Posterior vena cava (tissue), 2 donors: ENCODE measurements at regions of chr11 and their contacts with region 1.

Region 1: GRCh38 chr11:128565881-128566280 is 21.5 kb downstream of the ETS1 start:
- DNase-seq: no peak

Region 2: GRCh38 chr11:128052912-128053641 is 512.8 kb before region 1 on chr11:
- intact Hi-C with region 1: no loop called
- DNase-seq: no peak

Region 3: DNA sequence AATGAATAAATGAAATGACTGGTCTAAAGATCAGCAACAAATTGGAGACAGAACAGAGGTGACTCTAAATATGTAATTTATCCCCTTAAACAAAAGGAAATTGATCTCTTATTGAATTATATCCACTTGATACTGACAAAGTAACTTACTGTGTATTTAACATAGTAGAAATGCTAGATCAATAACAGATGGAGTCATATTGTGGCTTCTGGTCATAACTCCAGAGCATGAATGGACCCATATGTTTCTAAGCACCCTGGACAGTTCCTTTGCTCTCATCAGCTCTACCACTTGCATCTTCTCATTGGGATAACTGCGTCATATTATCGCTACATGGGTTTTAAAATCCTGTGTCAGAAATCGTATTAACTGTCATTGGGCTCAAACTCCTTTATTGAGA is 200.8 kb before region 1 on chr11:
- intact Hi-C with region 1: no loop called
- DNase-seq: no peak

Region 4: DNA sequence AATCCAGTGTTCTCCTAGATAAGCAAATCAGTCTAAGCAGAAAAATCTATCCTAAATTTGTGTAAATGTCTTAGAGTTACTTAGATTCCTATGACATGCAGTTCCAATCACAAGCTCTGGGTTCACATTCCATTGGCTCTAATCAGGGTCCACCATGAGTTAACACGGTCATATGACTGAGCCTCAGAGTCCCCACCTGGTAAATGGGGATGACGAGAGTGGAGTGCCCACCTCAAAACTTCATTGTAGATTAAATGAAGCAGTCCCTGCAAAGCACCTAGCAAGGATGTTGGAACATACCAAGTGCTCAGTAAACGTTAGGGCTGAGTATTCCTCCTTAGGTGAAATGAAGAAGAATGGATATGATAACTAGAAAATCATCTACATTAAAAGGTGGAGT is 18.4 kb after region 1 on chr11:
- intact Hi-C with region 1: loop called in 1 of 2 experiments (anchors 1 kb)
- DNase-seq: no peak

Region 5: DNA sequence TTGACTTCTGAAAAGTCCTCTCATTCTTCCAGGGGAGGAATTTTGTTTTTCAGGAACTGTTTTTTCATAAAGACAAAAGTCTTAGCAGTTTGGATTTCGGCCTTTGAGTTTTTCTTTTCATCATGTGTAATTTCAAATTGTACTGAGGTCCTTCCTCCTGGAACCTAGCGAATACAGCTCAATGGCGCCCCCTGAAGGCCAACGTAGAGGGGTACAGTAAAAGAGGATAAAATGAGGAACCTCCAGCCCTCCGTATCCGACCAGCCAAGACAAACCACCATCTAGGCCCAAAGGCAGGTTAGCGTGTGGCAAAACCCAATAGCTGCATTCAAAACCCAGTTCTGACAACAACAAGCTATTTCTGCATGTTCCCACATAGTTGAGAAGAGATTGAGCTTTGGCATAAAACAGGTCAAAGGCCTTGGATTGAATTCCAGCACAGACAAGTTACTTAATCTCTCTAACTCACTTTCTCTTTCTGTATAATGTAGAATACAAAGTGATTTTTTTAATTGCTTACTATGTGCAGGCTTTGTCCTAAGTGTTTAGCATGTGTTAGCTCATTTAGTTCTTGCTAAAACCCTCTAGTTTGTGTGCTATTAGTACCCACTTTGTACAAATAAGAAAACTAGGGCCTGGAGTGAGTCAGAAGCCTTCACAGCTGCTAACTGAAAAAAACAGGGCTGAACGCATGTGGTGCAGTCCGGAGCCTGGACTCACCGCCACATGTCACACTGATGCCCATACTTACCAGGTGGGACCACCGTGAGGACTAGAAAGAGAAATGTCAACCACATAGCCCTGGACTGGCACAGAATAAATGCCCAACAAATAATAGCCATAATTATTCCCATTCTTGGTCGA is 64.7 kb after region 1 on chr11:
- intact Hi-C with region 1: no loop called
- DNase-seq: peak; percentile 97